Activated CD4-positive, alpha-beta memory T cell treated with anti-CD3 and anti-CD28 coated beads for 36 hours (primary cell): ENCODE measurements at regions of chr5 and their contacts with region 1.

Region 1: DNA sequence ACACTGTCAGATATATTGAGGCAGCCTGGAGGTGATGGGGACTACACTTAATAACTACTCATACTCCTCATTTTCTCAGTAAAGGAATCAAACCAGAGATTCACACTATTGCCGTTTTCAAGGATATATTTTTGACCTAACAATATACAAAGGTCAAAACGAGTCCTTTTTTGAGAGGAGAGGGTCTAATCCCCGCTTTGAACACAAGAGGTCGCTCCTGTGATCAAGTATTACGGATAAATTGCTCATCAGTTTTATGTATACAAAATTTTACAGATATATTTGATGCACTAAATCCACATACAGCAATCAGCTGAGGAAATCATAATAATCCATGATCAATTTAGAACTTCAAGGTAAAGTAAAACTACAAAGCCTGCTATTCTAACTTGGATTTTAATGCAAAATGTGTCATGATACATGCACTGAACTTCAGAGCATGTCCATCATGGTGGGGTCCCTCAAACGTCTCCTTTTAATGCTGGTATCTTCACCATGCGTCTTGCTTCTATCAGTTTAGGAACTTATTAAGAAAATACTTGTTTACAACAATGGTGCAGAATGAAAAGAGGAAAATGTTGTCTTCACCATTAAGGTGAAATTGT is 2.5 kb upstream of the ISL1 start:
- DNase-seq: no peak
- H3K4me3 Mint-ChIP-seq: no peak overlapping the region
- H3K27ac Mint-ChIP-seq: no peak overlapping the region
- H3K4me1 Mint-ChIP-seq: peaks cover 8% of the 10 kb centered on the region
- H3K27me3 Mint-ChIP-seq: peaks cover 86% of the 10 kb centered on the region

Region 2: GRCh38 chr5:52356311-52356918 is 975.7 kb after region 1 on chr5:
- CTCF ChIA-PET with region 1: no interaction called
- POLR2A ChIA-PET with region 1: no interaction called
- intact Hi-C with region 1: loop called (anchors 2 kb)
- DNase-seq: no peak
- H3K4me3 Mint-ChIP-seq: no peak overlapping the region
- H3K27ac Mint-ChIP-seq: no peak overlapping the region
- H3K4me1 Mint-ChIP-seq: no peaks in the 10 kb centered on the region
- H3K27me3 Mint-ChIP-seq: no peaks in the 10 kb centered on the region

Region 3: DNA sequence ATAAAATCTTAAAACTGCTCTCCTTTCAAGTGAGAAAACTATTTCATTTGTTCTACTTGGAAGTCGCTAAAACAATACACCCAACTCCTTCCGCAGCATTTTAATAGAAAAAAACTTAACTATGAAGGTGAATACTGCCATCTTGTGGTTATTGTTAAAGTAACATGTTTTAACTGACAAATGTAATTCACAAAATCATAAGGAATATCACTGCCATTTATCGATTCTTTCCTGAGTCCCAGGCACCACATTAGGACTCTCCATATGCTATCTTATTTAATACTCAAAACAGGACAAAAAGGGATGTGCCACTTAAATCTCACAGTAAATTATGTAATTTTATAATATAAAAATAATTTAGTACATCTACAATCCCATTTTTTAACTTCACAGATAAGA is 1276.5 kb after region 1 on chr5:
- CTCF ChIA-PET with region 1: no interaction called
- POLR2A ChIA-PET with region 1: no interaction called
- intact Hi-C with region 1: loop called (anchors 2 kb)
- DNase-seq: no peak
- H3K4me3 Mint-ChIP-seq: no peak overlapping the region
- H3K27ac Mint-ChIP-seq: no peak overlapping the region
- H3K4me1 Mint-ChIP-seq: no peaks in the 10 kb centered on the region
- H3K27me3 Mint-ChIP-seq: peaks cover 6% of the 10 kb centered on the region